AG04450 (cell line): ENCODE measurements at regions of chr3 and their contacts with region 1.

Region 1: DNA sequence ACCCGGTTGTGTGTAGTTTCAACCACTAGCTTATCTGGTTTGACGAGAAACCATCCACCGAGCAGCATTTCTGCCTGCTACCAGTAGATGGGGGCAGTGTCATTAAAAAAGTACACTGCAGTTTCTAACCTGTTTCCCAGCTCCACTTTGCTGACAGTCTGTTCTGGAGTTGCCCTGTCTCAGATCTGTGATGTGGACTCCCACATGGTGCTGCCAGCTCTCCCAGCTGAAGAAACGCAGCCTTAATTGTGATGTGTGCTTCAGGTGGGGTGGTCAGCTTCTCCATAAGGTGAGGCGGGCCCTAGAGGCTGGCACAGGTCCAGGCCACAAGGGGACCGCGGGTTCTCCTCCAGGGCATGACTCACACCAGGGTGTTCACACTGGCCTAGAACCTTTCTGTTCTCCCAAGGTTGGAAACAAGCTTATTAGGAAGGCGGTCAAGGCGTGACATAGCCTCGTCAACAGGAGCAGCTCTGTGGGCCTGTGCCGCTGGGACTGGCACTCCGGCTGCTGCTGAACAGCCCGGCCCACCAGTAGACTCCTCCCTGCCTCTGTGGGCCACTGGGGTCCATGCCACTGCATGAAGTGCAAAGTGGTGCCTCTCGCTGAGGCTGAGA is 2.9 kb upstream of the FAM43A start:
- DNase-seq: peak; percentile 79
- H3K4me3 ChIP-seq: no peak overlapping the region
- H3K27ac ChIP-seq: peak overlapping the region; percentile 31
- H3K27me3 ChIP-seq: no peaks in the 10 kb centered on the region
- CTCF ChIP-seq: peak; percentile 88

Region 2: DNA sequence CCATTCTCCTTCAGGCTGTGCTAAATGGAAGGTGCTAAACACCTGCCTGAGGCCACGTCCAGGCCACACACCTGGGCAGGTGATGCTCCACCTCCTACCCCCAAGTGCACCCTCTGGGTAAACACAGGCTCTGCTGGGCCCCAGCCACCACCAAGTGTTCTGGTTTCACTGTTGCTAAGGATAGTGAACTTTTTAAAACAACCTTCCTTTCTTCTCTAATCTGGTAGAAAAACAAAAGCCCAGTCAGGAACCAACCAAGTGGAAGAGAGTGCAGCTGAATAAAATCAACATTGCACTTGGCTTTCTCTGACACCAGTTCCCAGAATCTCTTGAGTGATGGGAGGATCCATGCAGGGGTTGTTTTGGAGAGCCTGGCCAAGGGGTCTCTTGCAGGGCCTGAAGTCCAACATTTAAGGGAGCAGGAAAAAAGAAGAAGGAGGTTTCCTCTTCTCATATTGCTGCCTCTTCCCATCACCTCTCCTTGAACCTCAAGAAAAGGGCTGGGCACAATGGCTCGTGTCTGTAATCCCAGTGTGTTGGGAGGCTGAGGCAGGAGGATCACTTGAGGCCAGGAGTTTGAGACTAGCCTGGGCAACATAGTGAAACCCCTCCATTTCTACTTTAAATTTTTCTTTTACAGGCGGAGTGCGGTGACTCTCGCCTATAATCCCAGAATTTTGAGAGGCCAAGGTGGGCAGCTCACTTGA is 169.8 kb before region 1 on chr3:
- CTCF ChIA-PET with region 1: no interaction called
- POLR2A ChIA-PET with region 1: no interaction called
- DNase-seq: no peak
- H3K4me3 ChIP-seq: no peak overlapping the region
- H3K27ac ChIP-seq: no peak overlapping the region
- H3K27me3 ChIP-seq: no peaks in the 10 kb centered on the region
- CTCF ChIP-seq: no peak

Region 3: GRCh38 chr3:194808640-194809097 is 125.9 kb after region 1 on chr3:
- CTCF ChIA-PET with region 1: no interaction called
- POLR2A ChIA-PET with region 1: no interaction called
- DNase-seq: no peak
- H3K4me3 ChIP-seq: no peak overlapping the region
- H3K27ac ChIP-seq: no peak overlapping the region
- H3K27me3 ChIP-seq: peaks cover 57% of the 10 kb centered on the region
- CTCF ChIP-seq: no peak

Region 4: DNA sequence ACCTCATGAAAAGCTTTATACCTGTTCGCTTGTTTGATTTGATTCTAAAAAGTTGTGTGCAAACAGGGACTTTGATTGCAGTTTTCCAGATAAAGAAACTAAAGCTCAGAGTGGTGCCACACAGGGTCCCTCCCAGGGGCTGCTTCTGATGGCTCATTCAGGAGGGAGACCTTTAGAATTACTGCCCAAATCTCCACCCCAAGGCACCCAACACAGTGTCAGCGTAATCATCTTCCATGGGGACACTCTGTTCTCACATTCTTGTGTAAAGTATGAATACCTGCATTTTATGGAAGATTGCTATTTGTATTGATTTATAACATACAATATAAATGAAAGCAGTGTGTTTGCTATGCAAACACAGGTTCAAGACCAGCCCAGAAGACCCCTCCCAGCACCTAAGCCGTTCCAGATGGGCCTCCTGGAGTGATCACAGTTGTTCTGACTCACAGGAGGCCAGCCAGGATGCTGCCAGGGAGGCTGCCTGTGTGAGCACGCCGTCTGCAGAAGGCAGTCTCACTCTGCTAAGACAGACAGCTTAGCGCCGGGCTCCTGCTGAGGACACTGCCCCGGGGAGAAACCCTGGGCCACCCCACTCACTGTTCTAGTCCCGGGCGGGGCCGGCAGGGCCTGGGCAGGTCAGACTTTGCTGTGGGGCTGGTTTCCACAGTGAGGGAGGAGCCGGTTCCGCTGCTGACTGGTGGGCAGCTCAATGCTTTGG is 188.5 kb after region 1 on chr3:
- CTCF ChIA-PET with region 1: interaction called, 4 read pairs
- POLR2A ChIA-PET with region 1: interaction called, 22 read pairs
- DNase-seq: peak; percentile 69
- H3K4me3 ChIP-seq: no peak overlapping the region
- H3K27ac ChIP-seq: peak overlapping the region; percentile 88
- H3K27me3 ChIP-seq: peaks cover 2% of the 10 kb centered on the region
- CTCF ChIP-seq: no peak

Region 5: DNA sequence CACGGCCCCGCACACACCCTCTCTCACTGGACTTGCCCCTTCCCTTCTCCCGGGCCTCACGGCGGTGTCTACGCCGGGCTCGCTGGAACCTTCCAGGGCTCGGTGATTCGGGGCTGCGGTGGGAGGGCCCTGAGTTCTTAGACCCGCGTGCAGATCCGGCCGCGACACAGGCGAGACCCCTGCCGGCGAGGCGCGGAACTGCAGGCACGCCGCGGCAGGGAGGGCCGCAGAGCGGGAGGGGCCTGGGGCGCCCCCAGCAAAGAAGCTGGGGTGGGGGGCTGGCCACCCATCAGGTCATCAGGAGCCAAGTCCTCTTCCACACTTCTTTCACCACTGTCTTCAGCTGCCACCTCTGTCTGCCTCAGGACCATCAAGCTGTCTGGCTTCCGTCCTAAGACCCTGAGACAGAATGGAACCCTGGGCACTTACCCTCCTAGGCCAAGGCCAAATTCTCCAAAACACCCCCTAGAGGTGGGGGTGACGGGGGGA is 423.7 kb after region 1 on chr3:
- CTCF ChIA-PET with region 1: interaction called, 64 read pairs
- POLR2A ChIA-PET with region 1: interaction called, 11 read pairs
- DNase-seq: no peak
- H3K4me3 ChIP-seq: no peak overlapping the region
- H3K27ac ChIP-seq: no peak overlapping the region
- H3K27me3 ChIP-seq: no peaks in the 10 kb centered on the region
- CTCF ChIP-seq: peak; percentile 90

Region 6: GRCh38 chr3:195187609-195188425 is 505.0 kb after region 1 on chr3:
- CTCF ChIA-PET with region 1: interaction called, 13 read pairs
- POLR2A ChIA-PET with region 1: no interaction called
- DNase-seq: no peak
- H3K4me3 ChIP-seq: no peak overlapping the region
- H3K27ac ChIP-seq: peak overlapping the region; percentile 83
- H3K27me3 ChIP-seq: no peaks in the 10 kb centered on the region
- CTCF ChIP-seq: no peak

Region 7: GRCh38 chr3:195442573-195443390 is 760.0 kb after region 1 on chr3 and contains the start of gene ACAP2:
- CTCF ChIA-PET with region 1: interaction called, 11 read pairs
- POLR2A ChIA-PET with region 1: no interaction called
- DNase-seq: peak; percentile 99
- H3K4me3 ChIP-seq: peak within 1 kb of the TSS; percentile 60
- H3K27ac ChIP-seq: peak within 1 kb of the TSS; percentile 25
- H3K27me3 ChIP-seq: no peaks in the 10 kb centered on the region
- CTCF ChIP-seq: no peak
- polyA plus RNA-seq, gene ACAP2: 35.9 and 50.2 TPM in 2 replicates